ENCODE measurements at regions of chr6 and their contacts with region 1.

Region 1: GRCh38 chr6:2353412-2354137 is 108.2 kb upstream of the GMDS start:
- DNase-seq: peak; percentile 9 to 48 (median 39)
- ATAC-seq: peak; percentile 42
- H3K4me3 ChIP-seq: no peak overlapping the region
- H3K4me3 Mint-ChIP-seq: no peak overlapping the region
- H3K27ac ChIP-seq: no peak overlapping the region
- H3K27ac Mint-ChIP-seq: no peak overlapping the region
- H3K4me1 ChIP-seq: no peaks in the 10 kb centered on the region
- H3K4me1 Mint-ChIP-seq: no peaks in the 10 kb centered on the region
- H3K27me3 ChIP-seq: no peaks in the 10 kb centered on the region
- H3K27me3 Mint-ChIP-seq: peaks cover 0 to 7% (median 0%) of the 10 kb centered on the region in 5 donors

Region 2: DNA sequence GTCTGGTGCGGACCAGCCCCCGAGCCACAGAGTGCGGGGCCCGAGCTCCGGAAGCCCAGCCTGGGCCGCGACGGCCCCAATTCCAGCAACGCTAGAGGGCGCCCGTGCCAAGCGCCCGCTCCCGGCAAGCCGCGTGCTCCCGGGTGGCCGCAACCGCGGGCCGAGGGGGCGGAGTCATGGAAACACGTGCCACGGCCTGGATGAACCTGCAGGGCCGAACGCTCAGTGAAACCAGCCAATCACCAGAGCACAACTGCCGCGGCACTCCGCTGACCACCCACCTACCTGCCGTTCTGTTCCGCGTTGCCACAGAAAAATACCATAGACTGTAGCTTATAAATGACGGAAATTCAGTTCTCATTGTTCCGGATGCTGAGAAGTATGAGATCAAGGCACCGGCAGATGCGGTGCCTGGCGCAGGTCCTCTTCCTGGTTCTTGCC is 829.5 kb before region 1 on chr6:
- CTCF ChIA-PET with region 1: no interaction called
- POLR2A ChIA-PET with region 1: no interaction called
- intact Hi-C with region 1: loop called in 1 of 2 experiments (anchors 10 kb)
- DNase-seq: peak; percentile 58 to 82 (median 75)
- ATAC-seq: peak; percentile 89
- H3K4me3 ChIP-seq: peak overlapping the region; percentile 60
- H3K4me3 Mint-ChIP-seq: peak overlapping the region; percentile 64 to 87 (median 79)
- H3K27ac ChIP-seq: no peak overlapping the region
- H3K27ac Mint-ChIP-seq: peak overlapping the region; percentile 51 to 93 (median 90)
- H3K4me1 ChIP-seq: peaks cover 19 to 50% of the 10 kb centered on the region in 2 donors
- H3K4me1 Mint-ChIP-seq: peaks cover 35 to 58% (median 48%) of the 10 kb centered on the region in 7 donors
- H3K27me3 ChIP-seq: no peaks in the 10 kb centered on the region
- H3K27me3 Mint-ChIP-seq: peaks cover 0 to 16% (median 4%) of the 10 kb centered on the region in 5 donors

Region 3: GRCh38 chr6:1596088-1596852 is 757.3 kb before region 1 on chr6:
- CTCF ChIA-PET with region 1: interaction called, 10 read pairs
- POLR2A ChIA-PET with region 1: no interaction called
- intact Hi-C with region 1: loop called (anchors 1 to 2 kb)
- DNase-seq: peak in 8 of 9 donors; percentile 45 to 76 (median 63)
- ATAC-seq: peak; percentile 90
- H3K4me3 ChIP-seq: no peak overlapping the region
- H3K4me3 Mint-ChIP-seq: peak overlapping the region in 6 of 10 donors; percentile 7 to 42 (median 30)
- H3K27ac ChIP-seq: no peak overlapping the region
- H3K27ac Mint-ChIP-seq: peak overlapping the region in 1 of 9 donors; percentile 28
- H3K4me1 ChIP-seq: peaks cover 0 to 4% of the 10 kb centered on the region in 2 donors
- H3K4me1 Mint-ChIP-seq: peaks cover 4 to 9% (median 7%) of the 10 kb centered on the region in 7 donors
- H3K27me3 ChIP-seq: peaks cover 0 to 4% of the 10 kb centered on the region in 2 donors
- H3K27me3 Mint-ChIP-seq: peaks cover 59 to 68% (median 60%) of the 10 kb centered on the region in 5 donors

Region 4: GRCh38 chr6:1604158-1605030 is 749.2 kb before region 1 on chr6:
- CTCF ChIA-PET with region 1: interaction called, 4 read pairs
- POLR2A ChIA-PET with region 1: no interaction called
- intact Hi-C with region 1: loop called in 1 of 2 experiments (anchors 1 kb)
- DNase-seq: peak in 8 of 9 donors; percentile 40 to 81 (median 71)
- ATAC-seq: peak; percentile 86
- H3K4me3 ChIP-seq: no peak overlapping the region
- H3K4me3 Mint-ChIP-seq: peak overlapping the region in 5 of 10 donors; percentile 25 to 74 (median 50)
- H3K27ac ChIP-seq: no peak overlapping the region
- H3K27ac Mint-ChIP-seq: no peak overlapping the region
- H3K4me1 ChIP-seq: peaks cover 15 to 35% of the 10 kb centered on the region in 2 donors
- H3K4me1 Mint-ChIP-seq: peaks cover 22 to 41% (median 36%) of the 10 kb centered on the region in 7 donors
- H3K27me3 ChIP-seq: peaks cover 8 to 26% of the 10 kb centered on the region in 2 donors
- H3K27me3 Mint-ChIP-seq: peaks cover 77 to 84% (median 80%) of the 10 kb centered on the region in 5 donors

Region 5: DNA sequence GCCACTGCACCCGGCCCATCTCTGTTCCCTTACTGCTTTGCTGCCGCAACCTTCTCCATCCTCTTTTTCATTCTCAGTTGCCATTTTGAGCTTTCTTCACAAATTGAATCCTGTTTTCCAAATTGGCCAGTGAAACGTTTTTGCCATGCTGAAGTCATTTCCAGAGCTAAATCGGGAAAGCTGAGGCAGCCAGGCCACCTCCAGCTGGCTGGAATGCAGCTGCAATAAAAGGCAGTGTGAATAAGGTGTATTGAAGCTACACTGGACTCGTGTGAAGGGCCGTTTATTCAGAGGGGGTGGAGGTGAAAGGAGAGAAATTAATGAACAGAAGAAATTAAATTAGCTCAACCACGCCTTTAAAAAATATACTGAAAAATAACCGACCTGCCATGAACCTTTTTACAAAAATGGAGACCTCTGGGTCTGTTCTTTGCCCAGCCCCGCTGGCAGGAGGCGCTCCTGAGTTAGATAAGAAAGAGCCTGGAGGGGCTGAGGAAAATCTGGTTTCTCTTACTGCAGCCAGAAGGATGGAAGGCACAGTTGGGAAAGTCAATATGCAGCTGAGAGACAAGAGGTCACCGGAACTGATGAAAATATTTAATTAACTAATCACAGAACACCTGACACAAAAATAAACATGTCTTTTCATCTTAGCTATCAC is 460.0 kb before region 1 on chr6:
- CTCF ChIA-PET with region 1: no interaction called
- POLR2A ChIA-PET with region 1: no interaction called
- intact Hi-C with region 1: loop called in 1 of 2 experiments (anchors 10 kb)
- DNase-seq: no peak
- ATAC-seq: no peak
- H3K4me3 ChIP-seq: no peak overlapping the region
- H3K4me3 Mint-ChIP-seq: no peak overlapping the region
- H3K27ac ChIP-seq: no peak overlapping the region
- H3K27ac Mint-ChIP-seq: no peak overlapping the region
- H3K4me1 ChIP-seq: no peaks in the 10 kb centered on the region
- H3K4me1 Mint-ChIP-seq: peaks cover 0 to 4% (median 0%) of the 10 kb centered on the region in 7 donors
- H3K27me3 ChIP-seq: no peaks in the 10 kb centered on the region
- H3K27me3 Mint-ChIP-seq: no peaks in the 10 kb centered on the region

Region 6: GRCh38 chr6:2103644-2104523 is 249.7 kb before region 1 on chr6:
- CTCF ChIA-PET with region 1: interaction called, 3 read pairs
- POLR2A ChIA-PET with region 1: no interaction called
- intact Hi-C with region 1: loop called (anchors 1 to 5 kb)
- DNase-seq: peak in 6 of 9 donors; percentile 11 to 48 (median 30)
- ATAC-seq: peak; percentile 69
- H3K4me3 ChIP-seq: no peak overlapping the region
- H3K4me3 Mint-ChIP-seq: no peak overlapping the region
- H3K27ac ChIP-seq: no peak overlapping the region
- H3K27ac Mint-ChIP-seq: no peak overlapping the region
- H3K4me1 ChIP-seq: no peaks in the 10 kb centered on the region
- H3K4me1 Mint-ChIP-seq: peaks cover 0 to 3% (median 0%) of the 10 kb centered on the region in 7 donors
- H3K27me3 ChIP-seq: no peaks in the 10 kb centered on the region
- H3K27me3 Mint-ChIP-seq: no peaks in the 10 kb centered on the region

Region 7: DNA sequence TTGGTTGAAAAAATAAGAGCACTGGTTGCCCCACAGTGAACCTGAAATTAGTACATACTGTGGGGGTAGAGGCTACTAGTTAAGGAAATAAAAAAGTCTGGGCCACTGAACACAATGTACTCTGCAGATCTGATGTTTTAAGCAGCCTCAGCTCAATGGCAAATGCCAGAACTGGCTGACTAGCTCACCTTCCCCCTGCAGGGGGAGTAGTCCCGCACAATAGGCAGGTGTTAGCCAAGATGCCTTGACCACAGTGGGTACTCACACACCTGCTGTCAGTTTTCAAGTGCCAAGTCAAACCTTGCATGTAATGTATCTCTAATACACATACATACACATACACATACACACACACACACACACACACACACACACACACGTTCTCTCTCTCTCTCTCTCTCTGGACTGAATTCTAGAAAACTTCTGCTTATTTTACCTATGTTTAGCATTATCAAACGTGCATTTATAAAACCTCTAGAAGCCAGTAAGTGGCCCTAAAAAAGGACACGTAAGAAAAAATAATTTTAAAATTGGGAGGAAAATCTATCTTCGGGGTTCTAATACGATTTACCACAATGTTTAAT is 144.3 kb before region 1 on chr6:
- CTCF ChIA-PET with region 1: no interaction called
- POLR2A ChIA-PET with region 1: no interaction called
- intact Hi-C with region 1: loop called in 1 of 2 experiments (anchors 1 kb)
- DNase-seq: peak in 2 of 9 donors; percentile 10 to 35
- ATAC-seq: peak; percentile 65
- H3K4me3 ChIP-seq: no peak overlapping the region
- H3K4me3 Mint-ChIP-seq: no peak overlapping the region
- H3K27ac ChIP-seq: no peak overlapping the region
- H3K27ac Mint-ChIP-seq: no peak overlapping the region
- H3K4me1 ChIP-seq: no peaks in the 10 kb centered on the region
- H3K4me1 Mint-ChIP-seq: peaks cover 0 to 14% (median 0%) of the 10 kb centered on the region in 7 donors
- H3K27me3 ChIP-seq: no peaks in the 10 kb centered on the region
- H3K27me3 Mint-ChIP-seq: peaks cover 0 to 3% (median 0%) of the 10 kb centered on the region in 5 donors